Kidney (tissue), 22 donors: ENCODE measurements at regions of chr4 and their contacts with region 1.

Region 1: GRCh38 chr4:2761035-2761923 is 5.1 kb upstream of the TNIP2 start:
- DNase-seq: peak in 3 of 5 donors; percentile 24 to 54 (median 49)
- H3K4me3 ChIP-seq: peak overlapping the region in 1 of 3 donors; percentile 19
- H3K27ac ChIP-seq: peak overlapping the region; percentile 91 to 92
- H3K4me1 ChIP-seq: peaks cover 0 to 9% (median 8%) of the 10 kb centered on the region in 3 donors
- H3K27me3 ChIP-seq: no peaks in the 10 kb centered on the region
- CTCF ChIP-seq: peak; percentile 11

Region 2: GRCh38 chr4:2923141-2923551 is 161.9 kb after region 1 on chr4:
- intact Hi-C with region 1: loop called (anchors 10 kb)
- DNase-seq: peak in 1 of 5 donors; percentile 37
- H3K4me3 ChIP-seq: no peak overlapping the region
- H3K27ac ChIP-seq: no peak overlapping the region
- H3K4me1 ChIP-seq: peaks cover 0 to 14% (median 8%) of the 10 kb centered on the region in 3 donors
- H3K27me3 ChIP-seq: no peaks in the 10 kb centered on the region
- CTCF ChIP-seq: no peak